Posterior vena cava (tissue), 2 donors: ENCODE measurements at regions of chr5 and their contacts with region 1.

Region 1: GRCh38 chr5:114449860-114450421 is 88.1 kb downstream of the KCNN2 start:
- DNase-seq: peak; percentile 87

Region 2: GRCh38 chr5:112525217-112525616 is 1924.7 kb before region 1 on chr5:
- intact Hi-C with region 1: no loop called
- DNase-seq: no peak

Region 3: GRCh38 chr5:113612060-113612496 is 837.9 kb before region 1 on chr5:
- intact Hi-C with region 1: loop called in 1 of 2 experiments (anchors 10 kb)
- DNase-seq: no peak

Region 4: GRCh38 chr5:113678924-113679575 is 770.9 kb before region 1 on chr5:
- intact Hi-C with region 1: loop called in 1 of 2 experiments (anchors 10 kb)
- DNase-seq: no peak